Activated naive CD4-positive, alpha-beta T cell treated with anti-CD3 and anti-CD28 coated beads, Interleukin-2, amount 10 ng/mL, durations not matched to agents 7 days and 5 days (primary cell): ENCODE measurements at regions of chr6 and their contacts with region 1.

Region 1: GRCh38 chr6:31493875-31494694 is 3.9 kb upstream of the MICB start:
- DNase-seq: peak; percentile 86
- H3K4me3 Mint-ChIP-seq: peak overlapping the region; percentile 81
- H3K27ac Mint-ChIP-seq: peak overlapping the region; percentile 81
- H3K4me1 Mint-ChIP-seq: peaks cover 73% of the 10 kb centered on the region
- H3K27me3 Mint-ChIP-seq: no peaks in the 10 kb centered on the region

Region 2: GRCh38 chr6:31541658-31542521 is 47.8 kb after region 1 on chr6 and contains the start of gene DDX39B:
- CTCF ChIA-PET with region 1: interaction called, 19 read pairs
- DNase-seq: peak; percentile 95
- H3K4me3 Mint-ChIP-seq: peak within 1 kb of the TSS; percentile 99
- H3K27ac Mint-ChIP-seq: peak within 1 kb of the TSS; percentile 98
- H3K4me1 Mint-ChIP-seq: peaks cover 68% of the 10 kb centered on the region
- H3K27me3 Mint-ChIP-seq: no peaks in the 10 kb centered on the region